Activated CD4-positive, alpha-beta T cell treated with anti-CD3 and anti-CD28 coated beads for 36 hours (primary cell): ENCODE measurements at regions of chr16 and their contacts with region 1.

Region 1: GRCh38 chr16:70529051-70529777 is 5.6 kb downstream of the SF3B3 start:
- DNase-seq: no peak
- ATAC-seq: peak; percentile 42
- H3K4me3 Mint-ChIP-seq: peak overlapping the region; percentile 41
- H3K27ac Mint-ChIP-seq: peak overlapping the region; percentile 74
- H3K4me1 Mint-ChIP-seq: peaks cover 51% of the 10 kb centered on the region
- H3K27me3 Mint-ChIP-seq: no peaks in the 10 kb centered on the region

Region 2: GRCh38 chr16:70576431-70577255 is 47.4 kb after region 1 on chr16:
- CTCF ChIA-PET with region 1: interaction called, 3 read pairs
- POLR2A ChIA-PET with region 1: interaction called, 3 read pairs
- intact Hi-C with region 1: loop called in 1 of 2 experiments (anchors 5 kb)
- DNase-seq: no peak
- ATAC-seq: peak; percentile 43
- H3K4me3 Mint-ChIP-seq: no peak overlapping the region
- H3K27ac Mint-ChIP-seq: peak overlapping the region; percentile 51
- H3K4me1 Mint-ChIP-seq: peaks cover 21% of the 10 kb centered on the region
- H3K27me3 Mint-ChIP-seq: no peaks in the 10 kb centered on the region